Thyroid gland (tissue), 4 donors: ENCODE measurements at regions of chr11 and their contacts with region 1.

Region 1: GRCh38 chr11:45180179-45180842 is 33.9 kb downstream of the PRDM11 start:
- DNase-seq: peak; percentile 84 to 89
- H3K4me3 ChIP-seq: peak overlapping the region in 2 of 3 donors; percentile 36 to 55
- H3K27ac ChIP-seq: peak overlapping the region; percentile 94 to 97 (median 95)
- H3K4me1 ChIP-seq: peaks cover 29 to 51% of the 10 kb centered on the region in 2 donors
- H3K27me3 ChIP-seq: no peaks in the 10 kb centered on the region
- CTCF ChIP-seq: peak in 5 of 6 experiments; percentile 10 to 67 (median 56)
- POLR2A ChIP-seq: peak in 1 of 2 donors; percentile 8

Region 2: DNA sequence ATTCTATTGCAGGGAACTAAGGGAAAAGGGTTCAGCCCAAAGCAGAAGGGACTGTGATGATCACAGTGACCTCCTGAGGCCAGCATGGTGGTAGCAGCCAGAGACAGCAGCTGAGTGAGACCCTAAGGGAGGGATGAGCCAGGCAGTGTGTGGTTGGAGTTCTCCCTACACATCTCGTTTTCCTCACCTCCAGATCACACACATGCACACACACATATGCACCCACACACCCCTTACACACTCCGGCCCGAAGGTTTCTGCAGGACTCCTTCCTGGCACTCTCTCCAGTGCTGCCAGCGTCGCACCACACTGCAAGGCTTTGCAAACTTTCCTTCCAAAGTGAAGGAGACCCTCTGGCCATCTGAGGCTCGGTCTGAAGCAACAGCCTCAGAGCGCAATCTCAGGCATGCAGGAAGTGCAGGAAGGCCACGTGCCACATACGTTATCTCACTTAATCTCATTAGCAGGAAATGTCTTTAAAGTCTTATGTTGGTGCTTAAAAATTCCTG is 202.8 kb before region 1 on chr11:
- intact Hi-C with region 1: no loop called
- DNase-seq: no peak
- H3K4me3 ChIP-seq: no peak overlapping the region
- H3K27ac ChIP-seq: no peak overlapping the region
- H3K4me1 ChIP-seq: peaks cover 17 to 30% of the 10 kb centered on the region in 2 donors
- H3K27me3 ChIP-seq: no peaks in the 10 kb centered on the region
- CTCF ChIP-seq: peak in 1 of 6 experiments; percentile 14
- POLR2A ChIP-seq: no peak

Region 3: DNA sequence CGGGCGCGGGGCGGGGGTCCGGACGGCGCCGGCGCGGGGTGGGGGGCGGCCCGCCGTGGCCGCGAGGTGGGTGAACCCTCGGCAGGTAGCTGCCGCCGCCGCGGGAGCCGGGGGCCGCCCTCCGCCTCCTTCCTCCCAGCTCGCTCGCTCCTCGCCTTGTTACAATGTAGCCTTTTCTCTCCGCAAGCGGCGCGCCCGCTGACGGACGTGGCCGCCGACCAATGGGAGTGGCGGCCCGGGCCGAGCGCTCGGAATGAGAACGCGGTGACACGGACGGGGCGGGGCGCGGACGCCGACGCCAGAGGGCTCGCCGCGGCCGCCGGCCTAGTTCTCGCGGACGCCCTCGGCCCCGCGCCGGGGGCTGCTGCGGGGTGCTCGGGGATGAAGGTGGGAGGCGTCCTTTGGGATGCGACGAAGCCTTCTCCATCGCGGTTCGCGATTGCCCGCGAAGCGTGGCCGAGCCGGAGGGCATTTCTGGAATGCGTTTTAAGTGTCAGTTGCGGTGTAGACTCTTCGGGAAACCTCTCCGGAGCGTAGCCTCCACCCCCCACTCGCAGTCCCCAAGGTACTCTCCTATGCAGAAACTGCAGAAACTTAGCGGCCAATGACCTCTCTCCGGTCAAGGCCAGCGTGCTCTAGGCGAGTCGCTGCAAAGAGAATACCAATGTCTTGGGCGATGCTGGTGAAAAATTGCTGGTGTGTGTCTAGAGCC is 33.1 kb before region 1 on chr11:
- intact Hi-C with region 1: loop called (anchors 5 kb)
- DNase-seq: peak; percentile 95 to 96
- H3K4me3 ChIP-seq: peak overlapping the region; percentile 39 to 59 (median 54)
- H3K27ac ChIP-seq: peak overlapping the region; percentile 66 to 98 (median 89)
- H3K4me1 ChIP-seq: peaks cover 8 to 21% of the 10 kb centered on the region in 2 donors
- H3K27me3 ChIP-seq: no peaks in the 10 kb centered on the region
- CTCF ChIP-seq: peak in 2 of 6 experiments; percentile 10 to 14
- POLR2A ChIP-seq: peak in 1 of 2 donors; percentile 95